CD8-positive, alpha-beta T cell (primary cell): ENCODE measurements at regions of chr18 and their contacts with region 1.

Region 1: GRCh38 chr18:49321800-49322461 is 138.5 kb downstream of the DYM start:
- DNase-seq: no peak
- ATAC-seq: no peak
- H3K4me3 ChIP-seq: no peak overlapping the region
- H3K4me3 Mint-ChIP-seq: no peak overlapping the region
- H3K27ac ChIP-seq: no peak overlapping the region
- H3K27ac Mint-ChIP-seq: no peak overlapping the region
- H3K4me1 ChIP-seq: no peaks in the 10 kb centered on the region
- H3K4me1 Mint-ChIP-seq: peaks cover 10% of the 10 kb centered on the region
- H3K27me3 ChIP-seq: no peaks in the 10 kb centered on the region
- H3K27me3 Mint-ChIP-seq: no peaks in the 10 kb centered on the region
- CTCF ChIP-seq: no peak

Region 2: GRCh38 chr18:49305688-49306336 is 16.1 kb before region 1 on chr18:
- CTCF ChIA-PET with region 1: no interaction called
- POLR2A ChIA-PET with region 1: no interaction called
- intact Hi-C with region 1: loop called in 1 of 2 experiments (anchors 1 kb)
- DNase-seq: no peak
- ATAC-seq: no peak
- H3K4me3 ChIP-seq: no peak overlapping the region
- H3K4me3 Mint-ChIP-seq: no peak overlapping the region
- H3K27ac ChIP-seq: no peak overlapping the region
- H3K27ac Mint-ChIP-seq: no peak overlapping the region
- H3K4me1 ChIP-seq: no peaks in the 10 kb centered on the region
- H3K4me1 Mint-ChIP-seq: no peaks in the 10 kb centered on the region
- H3K27me3 ChIP-seq: no peaks in the 10 kb centered on the region
- H3K27me3 Mint-ChIP-seq: no peaks in the 10 kb centered on the region
- CTCF ChIP-seq: no peak

Region 3: DNA sequence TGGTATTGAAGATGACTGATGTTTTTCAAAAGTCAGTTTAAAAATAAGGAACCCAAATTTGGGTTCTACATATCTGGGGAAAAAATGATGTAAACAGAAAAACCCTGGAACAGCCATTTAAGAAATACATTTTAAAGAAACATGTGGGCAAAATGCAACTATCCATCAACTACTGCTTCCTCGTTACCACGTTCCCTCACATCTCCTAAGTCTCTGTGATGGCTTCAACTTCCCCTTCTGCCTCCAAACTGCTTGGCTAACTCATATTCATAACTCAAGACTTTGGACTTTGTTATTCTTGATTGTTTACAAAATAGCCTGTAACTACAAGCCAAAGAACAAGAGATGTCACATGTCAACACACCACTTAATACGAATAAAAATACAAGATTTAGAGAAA is 22.2 kb after region 1 on chr18:
- CTCF ChIA-PET with region 1: no interaction called
- POLR2A ChIA-PET with region 1: no interaction called
- intact Hi-C with region 1: loop called in 1 of 2 experiments (anchors 2 kb)
- DNase-seq: no peak
- ATAC-seq: no peak
- H3K4me3 ChIP-seq: no peak overlapping the region
- H3K4me3 Mint-ChIP-seq: no peak overlapping the region
- H3K27ac ChIP-seq: no peak overlapping the region
- H3K27ac Mint-ChIP-seq: no peak overlapping the region
- H3K4me1 ChIP-seq: peaks cover 3% of the 10 kb centered on the region
- H3K4me1 Mint-ChIP-seq: peaks cover 11% of the 10 kb centered on the region
- H3K27me3 ChIP-seq: no peaks in the 10 kb centered on the region
- H3K27me3 Mint-ChIP-seq: no peaks in the 10 kb centered on the region
- CTCF ChIP-seq: no peak

Region 4: GRCh38 chr18:50396005-50396660 is 1074.2 kb after region 1 on chr18:
- CTCF ChIA-PET with region 1: no interaction called
- POLR2A ChIA-PET with region 1: no interaction called
- intact Hi-C with region 1: no loop called
- DNase-seq: no peak
- ATAC-seq: no peak
- H3K4me3 ChIP-seq: no peak overlapping the region
- H3K4me3 Mint-ChIP-seq: no peak overlapping the region
- H3K27ac ChIP-seq: no peak overlapping the region
- H3K27ac Mint-ChIP-seq: no peak overlapping the region
- H3K4me1 ChIP-seq: no peaks in the 10 kb centered on the region
- H3K4me1 Mint-ChIP-seq: peaks cover 6% of the 10 kb centered on the region
- H3K27me3 ChIP-seq: no peaks in the 10 kb centered on the region
- H3K27me3 Mint-ChIP-seq: peaks cover 20% of the 10 kb centered on the region
- CTCF ChIP-seq: no peak